PC-3 (cell line): ENCODE measurements at regions of chr15 and their contacts with region 1.

Region 1: GRCh38 chr15:79184465-79184892 is 93.9 kb upstream of the RASGRF1 start:
- DNase-seq: peak; percentile 72
- ATAC-seq: 0 out of 2 replicates have a peak, but pooled peaks have one; percentile 56
- H3K4me3 ChIP-seq: no peak overlapping the region
- H3K27ac ChIP-seq: no peak overlapping the region
- H3K4me1 ChIP-seq: peaks cover 6% of the 10 kb centered on the region
- H3K27me3 ChIP-seq: peaks cover 16% of the 10 kb centered on the region
- CTCF ChIP-seq: peak; percentile 97

Region 2: DNA sequence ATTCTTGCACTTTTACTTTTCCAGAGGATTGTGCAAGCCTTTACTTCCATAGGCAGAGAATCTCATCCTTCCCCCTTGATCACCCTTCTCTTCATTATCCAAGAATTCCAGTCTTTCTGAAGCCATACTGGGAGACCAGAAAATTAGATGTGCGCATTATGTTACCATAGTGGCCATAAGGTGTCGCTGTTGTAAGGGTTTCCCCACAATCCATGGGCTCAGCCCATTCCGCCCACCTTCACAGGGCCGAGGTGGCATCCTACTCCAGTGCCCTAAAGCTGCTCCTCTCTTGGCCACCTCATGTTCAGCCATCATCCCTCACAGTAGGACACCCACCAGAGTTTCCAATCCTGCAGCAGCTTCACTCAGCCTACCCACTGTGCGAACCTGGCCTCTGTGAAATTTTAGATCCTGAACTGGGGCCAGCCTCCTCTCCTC is 274.7 kb before region 1 on chr15:
- CTCF ChIA-PET with region 1: no interaction called
- POLR2A ChIA-PET with region 1: no interaction called
- intact Hi-C with region 1: loop called (anchors 10 kb)
- DNase-seq: peak; percentile 73
- ATAC-seq: peak; percentile 69
- H3K4me3 ChIP-seq: no peak overlapping the region
- H3K27ac ChIP-seq: no peak overlapping the region
- H3K4me1 ChIP-seq: peaks cover 16% of the 10 kb centered on the region
- H3K27me3 ChIP-seq: no peaks in the 10 kb centered on the region
- CTCF ChIP-seq: peak; percentile 87

Region 3: GRCh38 chr15:79028411-79028964 is 156.0 kb before region 1 on chr15:
- CTCF ChIA-PET with region 1: interaction called, 8 read pairs
- POLR2A ChIA-PET with region 1: no interaction called
- intact Hi-C with region 1: loop called (anchors 1 kb)
- DNase-seq: peak; percentile 71
- ATAC-seq: peak; percentile 73
- H3K4me3 ChIP-seq: no peak overlapping the region
- H3K27ac ChIP-seq: no peak overlapping the region
- H3K4me1 ChIP-seq: no peaks in the 10 kb centered on the region
- H3K27me3 ChIP-seq: no peaks in the 10 kb centered on the region
- CTCF ChIP-seq: peak; percentile 96

Region 4: GRCh38 chr15:79130535-79131130 is 53.8 kb before region 1 on chr15:
- CTCF ChIA-PET with region 1: interaction called, 8 read pairs
- POLR2A ChIA-PET with region 1: no interaction called
- intact Hi-C with region 1: loop called (anchors 1 kb)
- DNase-seq: peak; percentile 20
- ATAC-seq: no peak
- H3K4me3 ChIP-seq: no peak overlapping the region
- H3K27ac ChIP-seq: no peak overlapping the region
- H3K4me1 ChIP-seq: no peaks in the 10 kb centered on the region
- H3K27me3 ChIP-seq: peaks cover 35% of the 10 kb centered on the region
- CTCF ChIP-seq: peak; percentile 43; the same call in 1 of the 2 replicates

Region 5: DNA sequence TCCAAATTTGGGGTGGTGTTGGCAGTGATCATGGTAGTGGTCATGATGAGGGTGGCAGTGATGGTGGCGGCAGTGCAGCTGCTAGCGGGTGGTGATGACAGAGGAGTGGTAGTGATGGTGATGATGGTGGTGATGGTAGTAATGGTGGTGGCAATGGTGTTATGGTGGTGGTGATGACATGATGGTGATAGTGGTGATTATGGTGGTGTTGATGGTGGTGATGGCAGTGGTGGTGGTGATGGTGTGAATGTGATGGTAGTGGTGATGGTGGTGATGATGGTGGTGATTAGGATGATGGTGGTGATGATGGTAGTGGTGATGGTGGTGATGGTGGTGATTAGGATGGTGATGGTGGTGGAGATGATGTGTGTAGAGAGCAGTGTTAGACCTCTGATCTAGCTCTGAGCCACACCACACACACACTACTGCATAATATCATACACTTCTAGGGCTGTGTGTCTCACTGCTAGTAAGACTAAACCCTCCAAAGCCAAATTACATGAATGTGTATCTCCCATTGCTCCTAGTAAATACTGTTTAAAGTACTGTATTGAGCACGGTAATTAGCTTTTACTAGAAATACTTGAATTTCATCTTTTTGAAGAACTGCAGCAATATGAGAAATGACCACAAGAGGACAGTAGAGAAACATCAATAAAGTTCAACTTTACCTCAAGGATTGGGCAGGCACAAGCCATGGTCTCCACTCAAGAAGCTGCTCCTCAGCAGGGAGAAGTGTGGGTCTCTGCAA is 155.3 kb after region 1 on chr15:
- CTCF ChIA-PET with region 1: no interaction called
- POLR2A ChIA-PET with region 1: no interaction called
- intact Hi-C with region 1: no loop called
- DNase-seq: peak; percentile 66
- ATAC-seq: peak; percentile 27; the same call in 1 of the 2 replicates
- H3K4me3 ChIP-seq: no peak overlapping the region
- H3K27ac ChIP-seq: no peak overlapping the region
- H3K4me1 ChIP-seq: no peaks in the 10 kb centered on the region
- H3K27me3 ChIP-seq: no peaks in the 10 kb centered on the region
- CTCF ChIP-seq: peak; percentile 87